Activated B cell treated with CpG ODN at 0.5 μM for 24 hours (primary cell): ENCODE measurements at regions of chr11 and their contacts with region 1.

Region 1: GRCh38 chr11:45930031-45930794 is 7.8 kb downstream of the LARGE2 start:
- DNase-seq: peak; percentile 78
- ATAC-seq: peak; percentile 82
- H3K4me3 Mint-ChIP-seq: peak overlapping the region; percentile 94
- H3K27ac Mint-ChIP-seq: peak overlapping the region; percentile 97
- H3K4me1 Mint-ChIP-seq: peaks cover 96% of the 10 kb centered on the region
- H3K27me3 Mint-ChIP-seq: no peaks in the 10 kb centered on the region
- CTCF ChIP-seq: no peak

Region 2: DNA sequence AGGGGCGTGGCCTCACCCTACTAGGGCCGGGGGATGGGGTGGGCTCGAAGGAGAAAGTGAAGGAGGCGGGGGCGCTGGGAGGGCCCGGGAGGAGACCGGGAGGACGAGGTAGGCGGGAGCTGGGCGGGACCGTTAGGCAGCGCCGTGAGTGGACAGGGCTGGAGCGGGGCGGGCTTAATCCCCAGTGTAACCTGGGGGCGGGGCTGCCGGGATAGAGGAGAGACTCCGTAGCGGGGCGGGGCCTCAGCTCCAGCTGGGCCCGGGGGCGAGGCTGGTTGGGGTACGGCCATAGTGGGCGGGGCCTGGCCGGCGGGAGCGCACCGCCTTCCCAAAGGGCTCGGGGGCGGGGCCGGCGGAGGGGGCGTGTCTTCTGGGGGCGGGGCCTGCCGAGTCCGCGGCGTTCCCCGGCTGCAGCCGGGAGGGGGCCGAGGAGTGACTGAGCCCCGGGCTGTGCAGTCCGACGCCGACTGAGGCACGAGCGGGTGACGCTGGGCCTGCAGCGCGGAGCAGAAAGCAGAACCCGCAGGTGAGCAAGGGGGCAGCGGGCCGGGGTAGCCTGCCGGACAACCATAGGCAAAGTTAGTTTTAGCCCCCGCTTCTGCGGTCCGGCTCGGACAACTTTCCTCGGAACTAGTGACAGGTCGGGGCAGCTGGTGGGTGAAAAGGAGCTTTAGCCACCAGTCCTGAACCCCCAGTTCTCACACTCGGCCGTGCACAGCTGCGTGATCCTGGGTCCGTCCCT is 1364.8 kb before region 1 on chr11 and contains the start of gene CD82:
- CTCF ChIA-PET with region 1: no interaction called
- POLR2A ChIA-PET with region 1: no interaction called
- intact Hi-C with region 1: loop called (anchors 5 kb)
- DNase-seq: peak; percentile 98
- ATAC-seq: peak; percentile 83
- H3K4me3 Mint-ChIP-seq: peak within 1 kb of the TSS; percentile 92
- H3K27ac Mint-ChIP-seq: peak within 1 kb of the TSS; percentile 80
- H3K4me1 Mint-ChIP-seq: peaks cover 72% of the 10 kb centered on the region
- H3K27me3 Mint-ChIP-seq: no peaks in the 10 kb centered on the region
- CTCF ChIP-seq: no peak
- total RNA-seq, gene CD82: 728 and 770 TPM in 2 replicates

Region 3: DNA sequence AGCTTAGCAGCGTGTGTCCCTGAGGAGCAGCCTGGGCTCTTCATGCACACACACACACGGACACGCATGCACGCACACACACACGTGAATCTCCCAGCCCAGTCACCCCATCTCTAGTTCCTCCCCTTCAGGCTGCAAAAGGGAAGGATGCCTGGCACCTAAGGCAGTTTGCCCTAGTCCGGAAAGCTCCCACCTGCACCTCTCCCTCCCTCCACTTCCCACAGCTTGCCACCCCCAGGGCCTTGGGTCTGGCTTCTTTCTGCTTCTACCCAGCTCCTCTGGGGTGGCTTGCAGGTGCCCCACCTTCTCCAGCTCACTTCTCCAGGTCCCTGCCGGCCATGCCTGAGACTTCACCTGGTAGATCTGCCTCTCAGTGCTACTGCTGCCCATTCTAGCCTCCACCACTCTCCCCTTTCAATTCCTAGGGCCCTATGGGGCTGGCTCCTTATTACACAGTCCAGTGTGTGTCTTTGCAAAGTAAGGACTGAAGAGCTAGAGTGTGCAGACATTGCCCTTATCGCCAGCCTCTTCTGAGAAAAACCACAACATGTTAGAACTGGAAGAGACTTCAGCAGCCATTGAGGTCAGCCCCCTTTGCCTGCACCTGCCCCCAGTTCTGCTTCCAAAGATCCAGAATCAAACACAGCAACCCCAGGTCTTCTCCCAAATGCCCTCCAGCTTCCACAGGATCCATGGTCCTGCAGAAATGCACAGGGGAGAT is 231.3 kb before region 1 on chr11:
- CTCF ChIA-PET with region 1: no interaction called
- POLR2A ChIA-PET with region 1: no interaction called
- intact Hi-C with region 1: no loop called
- DNase-seq: no peak
- ATAC-seq: no peak
- H3K4me3 Mint-ChIP-seq: no peak overlapping the region
- H3K27ac Mint-ChIP-seq: no peak overlapping the region
- H3K4me1 Mint-ChIP-seq: no peaks in the 10 kb centered on the region
- H3K27me3 Mint-ChIP-seq: peaks cover 23% of the 10 kb centered on the region
- CTCF ChIP-seq: no peak

Region 4: GRCh38 chr11:45804761-45805304 is 125.4 kb before region 1 on chr11 and contains the start of gene SLC35C1:
- CTCF ChIA-PET with region 1: no interaction called
- POLR2A ChIA-PET with region 1: no interaction called
- intact Hi-C with region 1: loop called (anchors 5 kb)
- DNase-seq: peak; percentile 95
- ATAC-seq: peak; percentile 96
- H3K4me3 Mint-ChIP-seq: peak within 1 kb of the TSS; percentile 92
- H3K27ac Mint-ChIP-seq: peak within 1 kb of the TSS; percentile 78
- H3K4me1 Mint-ChIP-seq: peaks cover 41% of the 10 kb centered on the region
- H3K27me3 Mint-ChIP-seq: no peaks in the 10 kb centered on the region
- CTCF ChIP-seq: no peak
- total RNA-seq, gene SLC35C1: 8.6 and 8.8 TPM in 2 replicates

Region 5: GRCh38 chr11:45885274-45885920 is 44.8 kb before region 1 on chr11 and contains the start of gene MAPK8IP1:
- CTCF ChIA-PET with region 1: no interaction called
- POLR2A ChIA-PET with region 1: no interaction called
- intact Hi-C with region 1: loop called (anchors 2 kb)
- DNase-seq: peak; percentile 61
- ATAC-seq: peak; percentile 88
- H3K4me3 Mint-ChIP-seq: peak within 1 kb of the TSS; percentile 80
- H3K27ac Mint-ChIP-seq: no peak within 1 kb of the TSS
- H3K4me1 Mint-ChIP-seq: peaks cover 10% of the 10 kb centered on the region
- H3K27me3 Mint-ChIP-seq: no peaks in the 10 kb centered on the region
- CTCF ChIP-seq: no peak
- total RNA-seq, gene MAPK8IP1: 1.9 and 3.4 TPM in 2 replicates

Region 6: DNA sequence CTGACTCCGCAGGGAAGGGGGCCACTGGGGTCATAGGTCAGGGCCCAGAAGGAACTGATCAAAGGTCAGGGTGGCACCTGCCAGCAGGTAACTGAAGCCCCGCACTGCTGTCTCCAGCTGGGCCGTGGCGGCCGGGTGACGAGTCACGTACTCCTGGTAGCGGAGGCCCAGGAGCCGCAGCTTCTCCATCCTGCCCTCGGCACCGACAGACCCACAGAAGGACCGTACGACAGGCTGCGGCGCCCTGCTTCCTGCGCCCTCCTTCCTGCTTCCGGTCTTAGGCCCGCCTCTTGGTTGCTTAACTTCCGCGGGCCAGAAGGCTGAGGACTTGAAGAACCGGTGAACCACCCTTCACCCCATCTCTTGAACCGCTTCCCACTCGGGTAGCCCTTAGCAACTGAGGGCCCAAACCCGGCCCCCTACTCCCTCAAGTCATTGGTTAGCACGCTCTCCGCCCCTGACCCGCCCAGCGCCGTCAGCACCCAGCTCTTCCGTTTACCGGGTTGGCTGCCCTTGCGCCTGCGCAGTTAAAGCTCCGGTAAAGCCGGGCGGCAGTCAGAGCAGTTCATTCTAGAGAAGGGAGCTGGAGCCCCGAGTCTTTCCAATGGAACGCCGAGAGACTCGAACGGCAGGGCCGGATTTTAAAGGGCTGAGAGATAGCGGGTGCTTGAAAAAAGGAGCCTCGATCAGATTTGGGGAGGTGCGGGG is 12.4 kb before region 1 on chr11 and contains the start of gene PEX16:
- CTCF ChIA-PET with region 1: interaction called, 12 read pairs
- POLR2A ChIA-PET with region 1: interaction called, 263 read pairs
- intact Hi-C with region 1: loop called (anchors 1 kb)
- DNase-seq: peak; percentile 87
- ATAC-seq: peak; percentile 85
- H3K4me3 Mint-ChIP-seq: peak within 1 kb of the TSS; percentile 94
- H3K27ac Mint-ChIP-seq: peak within 1 kb of the TSS; percentile 97
- H3K4me1 Mint-ChIP-seq: peaks cover 61% of the 10 kb centered on the region
- H3K27me3 Mint-ChIP-seq: no peaks in the 10 kb centered on the region
- CTCF ChIP-seq: no peak
- total RNA-seq, gene PEX16: 72.0 and 77.7 TPM in 2 replicates

Region 7: DNA sequence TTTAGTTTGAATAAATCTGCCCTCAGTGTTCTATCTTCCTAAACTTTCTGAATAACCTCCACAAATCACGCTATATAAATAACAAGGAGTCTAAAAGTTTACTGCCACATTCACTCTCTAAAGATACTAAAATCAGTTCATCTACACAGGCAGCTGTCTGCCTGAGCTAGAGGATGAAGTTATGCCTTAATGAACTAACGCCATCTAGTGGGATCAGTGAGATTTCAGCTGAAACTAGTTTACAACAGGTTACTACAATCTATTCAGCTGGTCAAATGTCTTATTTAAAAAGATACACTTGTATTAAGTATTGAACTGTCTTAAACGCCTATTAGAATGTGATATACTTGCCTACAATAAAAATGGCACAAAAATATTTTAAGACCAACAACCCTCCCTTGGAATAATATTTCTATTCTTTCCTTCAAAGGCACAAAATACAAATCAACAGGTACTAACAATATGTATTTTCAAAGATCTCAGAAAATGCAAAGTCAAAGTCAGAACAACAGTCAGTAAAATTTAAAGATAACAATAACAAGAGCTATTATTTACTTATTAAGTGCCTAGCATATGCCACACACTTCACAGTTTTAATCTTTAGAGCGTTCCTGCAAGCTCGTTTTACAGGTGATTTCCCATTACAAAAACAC is 76.3 kb after region 1 on chr11:
- CTCF ChIA-PET with region 1: interaction called, 13 read pairs
- POLR2A ChIA-PET with region 1: interaction called, 5 read pairs
- intact Hi-C with region 1: no loop called
- DNase-seq: no peak
- ATAC-seq: peak; percentile 76
- H3K4me3 Mint-ChIP-seq: no peak overlapping the region
- H3K27ac Mint-ChIP-seq: no peak overlapping the region
- H3K4me1 Mint-ChIP-seq: peaks cover 3% of the 10 kb centered on the region
- H3K27me3 Mint-ChIP-seq: no peaks in the 10 kb centered on the region
- CTCF ChIP-seq: peak; percentile 20

Region 8: DNA sequence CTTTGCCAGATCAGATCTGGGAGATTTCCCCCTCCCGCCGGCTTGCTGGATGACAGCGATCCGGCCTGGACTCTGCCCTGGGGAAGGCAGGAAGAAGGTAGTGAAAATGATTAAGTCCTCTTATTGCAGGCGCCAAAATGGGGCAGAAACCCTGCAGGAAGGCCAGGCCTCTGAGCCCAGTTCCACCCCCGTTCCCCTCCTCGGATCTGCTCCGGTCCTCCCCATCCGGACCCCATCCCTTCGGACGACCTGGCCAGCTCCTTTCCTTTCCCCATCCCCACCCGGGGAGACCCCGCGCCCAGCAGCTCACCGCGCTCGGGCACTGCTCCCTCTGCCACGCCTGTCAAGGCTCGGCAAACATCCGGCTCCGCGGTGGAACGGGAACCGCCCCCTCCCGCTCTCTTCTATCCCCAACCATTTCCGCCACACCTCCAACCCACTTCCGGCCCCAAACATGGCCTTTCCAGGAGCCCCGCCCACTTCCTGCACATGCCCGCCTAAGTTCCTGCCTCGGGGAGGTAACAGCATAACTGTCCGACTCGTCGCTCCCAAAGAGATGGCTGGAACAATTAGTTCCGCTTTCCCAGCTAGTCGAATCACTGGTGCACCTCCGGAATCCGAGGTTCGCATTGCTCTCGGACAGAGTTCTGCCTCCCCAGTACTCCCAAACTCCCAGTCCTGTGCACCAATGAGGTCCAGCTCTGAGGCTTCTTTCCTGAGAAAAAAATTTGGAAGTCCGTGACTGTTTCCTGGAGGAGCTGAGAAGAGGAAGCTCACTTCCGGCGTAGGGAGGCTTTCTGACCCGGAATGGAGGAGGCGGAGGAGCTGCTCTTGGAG is 770.2 kb after region 1 on chr11 and contains the starts of genes ARHGAP1 and ZNF408:
- CTCF ChIA-PET with region 1: no interaction called
- POLR2A ChIA-PET with region 1: no interaction called
- intact Hi-C with region 1: loop called (anchors 10 kb)
- DNase-seq: peak; percentile 96
- ATAC-seq: peak; percentile 87
- H3K4me3 Mint-ChIP-seq: peak within 1 kb of the TSS; percentile 99
- H3K27ac Mint-ChIP-seq: peak within 1 kb of the TSS; percentile 95
- H3K4me1 Mint-ChIP-seq: peaks cover 51% of the 10 kb centered on the region
- H3K27me3 Mint-ChIP-seq: no peaks in the 10 kb centered on the region
- CTCF ChIP-seq: no peak
- total RNA-seq, gene ARHGAP1: 47.6 and 58.0 TPM in 2 replicates
- total RNA-seq, gene ZNF408: 15.6 and 16.1 TPM in 2 replicates